ENCODE measurements at regions of chr9 and their contacts with region 1.

Region 1: GRCh38 chr9:130866474-130866965 is 30.1 kb downstream of the QRFP start:
- DNase-seq: peak; percentile 64
- H3K4me3 Mint-ChIP-seq: no peak overlapping the region
- H3K27ac Mint-ChIP-seq: no peak overlapping the region
- H3K4me1 Mint-ChIP-seq: no peaks in the 10 kb centered on the region
- H3K27me3 Mint-ChIP-seq: no peaks in the 10 kb centered on the region

Region 2: GRCh38 chr9:130701056-130702022 is 165.2 kb before region 1 on chr9:
- CTCF ChIA-PET with region 1: interaction called, 63 read pairs
- POLR2A ChIA-PET with region 1: interaction called, 3 read pairs
- intact Hi-C with region 1: no loop called
- DNase-seq: peak; percentile 76
- H3K4me3 Mint-ChIP-seq: no peak overlapping the region
- H3K27ac Mint-ChIP-seq: no peak overlapping the region
- H3K4me1 Mint-ChIP-seq: peaks cover 20% of the 10 kb centered on the region
- H3K27me3 Mint-ChIP-seq: no peaks in the 10 kb centered on the region

Region 3: DNA sequence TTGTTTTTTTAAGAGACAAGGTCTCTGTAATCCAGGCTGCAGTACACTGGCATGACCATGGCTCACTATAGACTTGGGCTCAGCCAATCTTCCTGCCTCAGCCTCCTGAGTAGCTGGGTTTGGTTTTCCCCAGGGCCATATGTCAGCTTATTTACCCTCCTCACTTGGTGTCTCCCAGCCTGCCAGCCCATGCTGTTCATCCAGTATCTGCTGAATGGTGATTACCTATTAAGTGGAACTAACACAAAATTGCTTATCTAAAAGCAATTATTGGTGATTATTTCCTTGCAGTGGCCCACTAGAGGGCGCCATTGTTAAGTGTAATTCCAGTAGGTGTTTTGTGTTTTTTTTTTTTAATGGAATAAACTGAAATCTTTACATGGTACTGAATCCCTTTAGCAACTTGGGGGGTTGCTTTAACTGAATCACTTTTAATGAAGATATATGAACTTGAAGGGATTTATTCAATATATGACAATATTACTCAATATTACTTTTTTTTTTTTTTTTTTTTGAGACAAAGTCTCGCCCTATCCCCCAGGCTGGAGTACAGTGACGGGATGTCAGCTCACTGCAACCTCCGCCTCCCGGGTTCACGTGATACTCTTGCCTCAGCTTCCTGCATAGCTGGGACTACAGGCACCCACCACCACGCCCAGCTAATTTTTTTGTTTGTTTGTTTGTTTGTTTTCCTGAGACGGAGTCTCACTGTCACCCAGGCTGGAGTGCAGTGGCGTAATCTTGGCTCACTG is 159.1 kb before region 1 on chr9:
- CTCF ChIA-PET with region 1: interaction called, 63 read pairs
- POLR2A ChIA-PET with region 1: interaction called, 3 read pairs
- intact Hi-C with region 1: loop called (anchors 1 kb)
- DNase-seq: peak; percentile 69
- H3K4me3 Mint-ChIP-seq: no peak overlapping the region
- H3K27ac Mint-ChIP-seq: no peak overlapping the region
- H3K4me1 Mint-ChIP-seq: peaks cover 6% of the 10 kb centered on the region
- H3K27me3 Mint-ChIP-seq: no peaks in the 10 kb centered on the region

Region 4: GRCh38 chr9:130770679-130771442 is 95.7 kb before region 1 on chr9:
- CTCF ChIA-PET with region 1: interaction called, 139 read pairs
- POLR2A ChIA-PET with region 1: no interaction called
- intact Hi-C with region 1: loop called (anchors 1 kb)
- DNase-seq: no peak
- H3K4me3 Mint-ChIP-seq: no peak overlapping the region
- H3K27ac Mint-ChIP-seq: no peak overlapping the region
- H3K4me1 Mint-ChIP-seq: peaks cover 19% of the 10 kb centered on the region
- H3K27me3 Mint-ChIP-seq: no peaks in the 10 kb centered on the region

Region 5: GRCh38 chr9:130847327-130848217 is 18.9 kb before region 1 on chr9:
- CTCF ChIA-PET with region 1: interaction called, 10 read pairs
- POLR2A ChIA-PET with region 1: interaction called, 4 read pairs
- intact Hi-C with region 1: no loop called
- DNase-seq: no peak
- H3K4me3 Mint-ChIP-seq: no peak overlapping the region
- H3K27ac Mint-ChIP-seq: no peak overlapping the region
- H3K4me1 Mint-ChIP-seq: peaks cover 5% of the 10 kb centered on the region
- H3K27me3 Mint-ChIP-seq: no peaks in the 10 kb centered on the region

Region 6: DNA sequence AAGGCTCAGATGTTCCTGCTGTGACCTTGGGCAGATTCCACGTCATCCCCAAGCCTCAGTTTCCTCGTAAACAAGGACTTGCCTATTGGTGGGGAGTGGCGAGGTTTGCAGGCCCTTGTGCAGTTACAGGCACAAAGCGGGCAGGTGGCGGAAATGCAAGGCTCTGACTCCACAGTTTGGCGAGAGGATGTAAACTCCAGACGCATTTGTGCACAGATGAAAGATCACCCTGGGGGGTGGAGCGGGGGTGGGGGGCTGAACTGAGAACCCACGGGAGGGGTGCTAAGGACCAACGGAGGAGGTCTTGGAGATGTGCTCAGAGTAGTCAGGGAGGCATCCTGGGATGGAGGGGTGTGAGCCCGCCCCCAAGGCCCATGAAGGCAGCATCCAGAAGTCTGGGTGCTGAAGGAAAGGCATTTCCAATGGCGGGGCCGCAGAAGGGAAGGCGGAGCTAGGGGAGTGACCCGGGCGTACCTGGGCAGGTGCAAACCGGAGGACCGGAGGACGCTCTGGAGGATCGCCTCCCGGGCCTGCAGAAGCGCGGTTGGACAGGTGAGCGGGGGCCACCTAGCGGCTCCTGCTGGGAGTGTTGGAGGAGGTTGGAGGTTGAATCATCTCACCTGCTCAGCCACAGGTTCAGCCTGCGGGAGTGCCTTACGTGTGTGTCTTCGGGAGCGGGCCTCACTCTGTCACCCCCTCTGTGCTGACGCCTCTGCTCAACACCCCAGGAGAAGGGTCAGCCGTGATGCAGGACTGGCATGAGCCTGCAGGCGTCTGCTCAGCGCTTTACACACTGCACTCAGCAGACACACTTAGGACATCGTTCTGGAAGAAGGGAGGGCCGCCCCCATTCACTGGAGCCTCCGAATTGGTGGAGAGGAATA is 74.4 kb after region 1 on chr9:
- CTCF ChIA-PET with region 1: interaction called, 8 read pairs
- POLR2A ChIA-PET with region 1: no interaction called
- intact Hi-C with region 1: loop called (anchors 2 kb)
- DNase-seq: peak; percentile 85
- H3K4me3 Mint-ChIP-seq: no peak overlapping the region
- H3K27ac Mint-ChIP-seq: no peak overlapping the region
- H3K4me1 Mint-ChIP-seq: peaks cover 8% of the 10 kb centered on the region
- H3K27me3 Mint-ChIP-seq: peaks cover 45% of the 10 kb centered on the region

Region 7: GRCh38 chr9:131046581-131047202 is 180.2 kb after region 1 on chr9:
- CTCF ChIA-PET with region 1: interaction called, 62 read pairs
- POLR2A ChIA-PET with region 1: no interaction called
- intact Hi-C with region 1: loop called (anchors 1 kb)
- DNase-seq: peak; percentile 81
- H3K4me3 Mint-ChIP-seq: no peak overlapping the region
- H3K27ac Mint-ChIP-seq: no peak overlapping the region
- H3K4me1 Mint-ChIP-seq: peaks cover 4% of the 10 kb centered on the region
- H3K27me3 Mint-ChIP-seq: peaks cover 1% of the 10 kb centered on the region